H1 (cell line): ENCODE measurements at regions of chr4 and their contacts with region 1.

Region 1: GRCh38 chr4:185242749-185243533 is 33.5 kb downstream of the SNX25 start:
- DNase-seq: no peak
- H3K4me3 ChIP-seq: no peak overlapping the region
- H3K27ac ChIP-seq: no peak overlapping the region
- H3K4me1 ChIP-seq: no peaks in the 10 kb centered on the region
- H3K27me3 ChIP-seq: no peaks in the 10 kb centered on the region
- CTCF ChIP-seq: no peak
- EP300 ChIP-seq: no peak
- POLR2A ChIP-seq: no peak
- RAD21 ChIP-seq: no peak

Region 2: DNA sequence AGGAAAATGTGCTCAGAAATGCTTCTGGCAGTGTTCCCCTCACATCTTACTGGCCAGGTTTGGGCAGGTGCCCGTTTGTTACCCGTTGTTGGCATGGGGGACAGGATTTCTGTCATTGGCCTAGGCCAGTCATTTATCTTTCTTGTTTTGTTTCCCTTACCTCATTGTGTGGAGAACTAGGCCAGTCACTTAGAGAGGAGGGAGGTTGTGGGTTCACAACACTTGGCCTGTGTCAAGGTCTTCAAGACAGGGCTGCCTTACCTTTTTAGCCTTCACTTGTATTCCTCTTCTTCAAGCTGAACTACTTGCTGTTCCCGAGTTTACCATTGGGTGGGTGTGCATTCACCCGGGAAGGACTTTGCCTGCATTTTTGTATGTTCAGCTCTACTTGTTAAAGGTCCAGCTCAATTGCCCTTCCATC is 15.8 kb before region 1 on chr4:
- CTCF ChIA-PET with region 1: interaction called, 10 read pairs
- POLR2A ChIA-PET with region 1: no interaction called
- DNase-seq: peak in 1 of 2 experiments; percentile 43
- H3K4me3 ChIP-seq: no peak overlapping the region
- H3K27ac ChIP-seq: no peak overlapping the region
- H3K4me1 ChIP-seq: no peaks in the 10 kb centered on the region; a peak in 1 of 7 replicates
- H3K27me3 ChIP-seq: no peaks in the 10 kb centered on the region
- CTCF ChIP-seq: peak in 1 of 3 experiments; percentile 28; a peak in 2 of 4 replicates
- EP300 ChIP-seq: no peak
- POLR2A ChIP-seq: no peak
- RAD21 ChIP-seq: peak; percentile 36 to 53; a peak in 3 of 4 replicates

Region 3: GRCh38 chr4:185263419-185263818 is 20.5 kb after region 1 on chr4:
- CTCF ChIA-PET with region 1: no interaction called
- POLR2A ChIA-PET with region 1: no interaction called
- DNase-seq: no peak
- H3K4me3 ChIP-seq: no peak overlapping the region
- H3K27ac ChIP-seq: no peak overlapping the region
- H3K4me1 ChIP-seq: peaks cover 0 to 6% (median 2%) of the 10 kb centered on the region in 4 experiments; a peak in 3 of 7 replicates
- H3K27me3 ChIP-seq: no peaks in the 10 kb centered on the region
- CTCF ChIP-seq: no peak
- EP300 ChIP-seq: no peak
- POLR2A ChIP-seq: no peak
- RAD21 ChIP-seq: no peak